HEK293T (cell line): ENCODE measurements at regions of chr2 and their contacts with region 1.

Region 1: GRCh38 chr2:195656859-195657633 is at the start of gene SLC39A10:
- DNase-seq: peak; percentile 88

Region 2: GRCh38 chr2:195368249-195369217 is 288.5 kb before region 1 on chr2:
- CTCF ChIA-PET with region 1: no interaction called
- POLR2A ChIA-PET with region 1: no interaction called
- DNase-seq: no peak

Region 3: DNA sequence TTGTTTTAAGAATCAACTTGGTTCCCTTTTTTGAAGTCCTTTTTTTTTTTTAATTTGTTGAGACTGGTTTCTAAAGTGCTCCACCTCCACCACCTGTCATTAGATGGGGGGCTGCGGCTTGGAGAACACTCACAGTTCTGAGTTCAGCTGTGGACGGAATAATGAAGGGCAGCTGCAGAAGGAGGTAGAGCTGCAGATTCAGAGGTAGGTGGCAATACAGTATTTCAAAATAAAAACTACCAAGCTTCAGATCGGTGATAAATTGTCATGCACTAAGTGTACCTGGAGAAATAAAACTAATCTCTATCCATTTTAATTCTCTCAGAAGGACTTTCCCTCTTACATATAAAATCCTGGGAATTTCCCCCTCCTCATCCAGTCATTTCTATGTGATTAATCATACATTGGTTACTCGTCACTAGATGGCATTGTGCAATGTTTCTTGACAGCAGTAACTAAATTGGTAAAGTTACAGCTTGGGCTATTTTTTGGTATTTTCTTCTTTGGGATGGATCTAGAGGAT is 81.1 kb before region 1 on chr2:
- CTCF ChIA-PET with region 1: interaction called, 16 read pairs
- POLR2A ChIA-PET with region 1: interaction called, 3 read pairs
- DNase-seq: no peak